ENCODE measurements at regions of chr19 and their contacts with region 1.

Region 1: DNA sequence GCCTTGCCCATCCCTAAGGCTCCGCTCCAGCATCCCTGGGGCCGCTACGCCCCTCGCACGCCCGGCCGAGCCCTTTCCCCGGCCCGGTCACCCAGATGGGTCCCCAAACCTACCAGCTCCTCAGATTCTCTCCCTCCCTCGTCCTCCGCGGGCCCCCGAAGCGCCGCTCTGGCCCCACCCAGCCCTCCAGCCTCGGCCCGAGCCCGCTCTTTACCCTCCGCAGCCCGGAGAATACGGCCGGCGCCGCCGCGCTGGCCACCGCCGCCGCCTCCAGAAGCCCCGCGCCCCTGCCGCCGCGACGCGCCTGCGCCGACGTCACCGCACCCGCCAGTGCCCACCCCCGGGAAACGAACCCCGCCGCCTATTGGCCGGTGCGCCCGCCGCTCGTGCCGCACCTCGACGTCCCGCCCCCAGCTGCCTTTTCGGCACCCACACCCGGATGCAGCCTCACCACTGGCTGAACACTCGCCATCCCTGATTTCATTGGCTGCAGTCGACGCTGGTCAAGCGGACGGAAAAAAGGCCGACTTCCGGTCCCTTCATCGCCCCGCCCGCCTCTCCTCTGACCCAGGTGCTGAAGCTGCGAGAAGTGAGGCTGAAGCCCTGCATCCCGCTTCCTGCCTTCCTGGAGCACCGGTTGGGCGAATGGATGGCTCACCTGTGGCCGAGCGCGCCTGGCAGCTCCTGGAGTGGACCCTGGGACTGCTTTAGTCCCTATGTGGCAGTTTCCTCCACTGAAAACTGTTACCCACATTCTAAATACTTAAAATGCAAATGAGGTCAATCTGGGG is at the start of gene DAPK3:
- DNase-seq: peak; percentile 95
- ATAC-seq: peak; percentile 80
- H3K4me3 ChIP-seq: peak within 1 kb of the TSS; percentile 95 to 98 (median 97)
- H3K27ac ChIP-seq: peak within 1 kb of the TSS; percentile 72
- H3K4me1 ChIP-seq: peaks cover 28% of the 10 kb centered on the region
- H3K27me3 ChIP-seq: no peaks in the 10 kb centered on the region; a peak in 1 of 5 replicates
- CTCF ChIP-seq: no peak
- EP300 ChIP-seq: no peak
- POLR2A ChIP-seq: peak; percentile 50 to 68
- RAD21 ChIP-seq: no peak; the same call in 1 of the 2 replicates
- total RNA-seq, gene DAPK3: 22.0 and 30.5 TPM in 2 replicates

Region 2: DNA sequence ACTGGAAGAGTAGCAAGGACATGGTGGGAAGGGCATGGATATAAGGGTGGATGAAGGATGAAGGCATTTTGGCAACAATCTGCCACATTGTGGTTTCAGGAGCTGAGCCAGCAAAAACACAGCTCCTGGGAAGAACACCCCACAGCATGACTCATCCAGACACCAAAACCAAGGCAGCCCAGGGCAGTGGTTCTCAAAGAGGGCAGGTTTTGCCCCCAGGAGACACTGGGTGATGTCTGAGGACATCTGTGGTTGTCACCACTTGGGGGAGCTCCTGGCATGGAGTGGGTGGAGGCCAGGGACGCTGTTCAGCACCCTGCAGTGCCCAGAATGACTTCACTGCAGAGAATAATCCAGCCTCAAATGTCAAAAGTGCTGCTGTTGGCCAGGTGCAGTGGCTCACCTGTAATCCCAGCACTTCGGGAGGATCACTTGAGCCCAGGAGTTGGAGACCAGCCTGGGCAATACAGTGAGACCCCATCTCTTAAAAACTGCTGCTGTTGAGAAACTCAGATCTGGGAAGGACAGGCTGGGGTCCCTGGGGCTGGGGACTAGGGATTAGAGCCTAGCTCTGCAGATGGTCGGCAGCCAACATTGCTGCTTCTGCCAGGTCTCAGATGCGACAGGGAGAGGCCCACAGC is 118.3 kb before region 1 on chr19:
- CTCF ChIA-PET with region 1: no interaction called
- POLR2A ChIA-PET with region 1: no interaction called
- in situ Hi-C with region 1: no loop called
- intact Hi-C with region 1: loop called (anchors 5 kb)
- DNase-seq: peak; percentile 31
- ATAC-seq: no peak
- H3K4me3 ChIP-seq: no peak overlapping the region
- H3K27ac ChIP-seq: no peak overlapping the region
- H3K4me1 ChIP-seq: peaks cover 16% of the 10 kb centered on the region
- H3K27me3 ChIP-seq: peaks cover 1% of the 10 kb centered on the region in 2 experiments; a peak in 1 of 5 replicates
- CTCF ChIP-seq: peak; percentile 66
- EP300 ChIP-seq: no peak
- POLR2A ChIP-seq: no peak
- RAD21 ChIP-seq: peak; percentile 41; the same call in 1 of the 2 replicates

Region 3: GRCh38 chr19:3955688-3956087 is 15.3 kb before region 1 on chr19:
- CTCF ChIA-PET with region 1: no interaction called
- POLR2A ChIA-PET with region 1: interaction called, 18 read pairs
- in situ Hi-C with region 1: no loop called
- intact Hi-C with region 1: no loop called
- DNase-seq: no peak
- ATAC-seq: no peak
- H3K4me3 ChIP-seq: no peak overlapping the region
- H3K27ac ChIP-seq: no peak overlapping the region
- H3K4me1 ChIP-seq: peaks cover 6% of the 10 kb centered on the region; the same call in 1 of the 2 replicates
- H3K27me3 ChIP-seq: peaks cover 0 to 7% of the 10 kb centered on the region in 2 experiments; a peak in 1 of 5 replicates
- CTCF ChIP-seq: no peak
- EP300 ChIP-seq: no peak
- POLR2A ChIP-seq: no peak
- RAD21 ChIP-seq: no peak

Region 4: DNA sequence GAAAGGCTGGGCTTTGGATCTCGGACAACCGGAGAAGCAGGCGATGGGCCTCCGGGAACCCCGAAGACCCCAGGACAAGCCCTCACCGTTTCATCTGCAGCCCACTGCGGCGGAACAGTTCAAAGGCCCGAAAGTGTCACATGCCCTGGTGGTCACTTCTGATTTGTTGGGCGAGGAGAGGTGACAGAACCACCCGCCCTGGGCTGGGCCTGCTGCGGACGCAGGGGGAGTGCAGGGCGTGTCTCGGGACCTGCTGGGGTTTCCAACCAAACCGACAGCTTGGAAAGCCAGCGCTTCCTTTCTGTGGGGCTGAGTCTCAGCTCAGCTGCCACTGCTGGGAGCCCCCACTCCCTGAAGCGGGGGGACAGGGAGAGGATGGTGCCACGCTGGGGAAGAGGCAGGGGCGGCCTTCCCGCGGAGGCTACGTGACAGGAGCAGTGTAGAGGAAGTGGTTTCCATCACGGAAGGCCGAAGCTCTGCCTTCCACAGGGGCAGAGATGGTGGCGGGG is 118.5 kb after region 1 on chr19:
- CTCF ChIA-PET with region 1: no interaction called
- POLR2A ChIA-PET with region 1: no interaction called
- in situ Hi-C with region 1: no loop called
- intact Hi-C with region 1: no loop called
- DNase-seq: no peak
- ATAC-seq: no peak
- H3K4me3 ChIP-seq: no peak overlapping the region
- H3K27ac ChIP-seq: no peak overlapping the region
- H3K4me1 ChIP-seq: peaks cover 20% of the 10 kb centered on the region
- H3K27me3 ChIP-seq: no peaks in the 10 kb centered on the region
- CTCF ChIP-seq: no peak
- EP300 ChIP-seq: no peak
- POLR2A ChIP-seq: no peak
- RAD21 ChIP-seq: no peak

Measured in HepG2 (cell line).